ENCODE measurements at regions of chr16 and their contacts with region 1.

Region 1: DNA sequence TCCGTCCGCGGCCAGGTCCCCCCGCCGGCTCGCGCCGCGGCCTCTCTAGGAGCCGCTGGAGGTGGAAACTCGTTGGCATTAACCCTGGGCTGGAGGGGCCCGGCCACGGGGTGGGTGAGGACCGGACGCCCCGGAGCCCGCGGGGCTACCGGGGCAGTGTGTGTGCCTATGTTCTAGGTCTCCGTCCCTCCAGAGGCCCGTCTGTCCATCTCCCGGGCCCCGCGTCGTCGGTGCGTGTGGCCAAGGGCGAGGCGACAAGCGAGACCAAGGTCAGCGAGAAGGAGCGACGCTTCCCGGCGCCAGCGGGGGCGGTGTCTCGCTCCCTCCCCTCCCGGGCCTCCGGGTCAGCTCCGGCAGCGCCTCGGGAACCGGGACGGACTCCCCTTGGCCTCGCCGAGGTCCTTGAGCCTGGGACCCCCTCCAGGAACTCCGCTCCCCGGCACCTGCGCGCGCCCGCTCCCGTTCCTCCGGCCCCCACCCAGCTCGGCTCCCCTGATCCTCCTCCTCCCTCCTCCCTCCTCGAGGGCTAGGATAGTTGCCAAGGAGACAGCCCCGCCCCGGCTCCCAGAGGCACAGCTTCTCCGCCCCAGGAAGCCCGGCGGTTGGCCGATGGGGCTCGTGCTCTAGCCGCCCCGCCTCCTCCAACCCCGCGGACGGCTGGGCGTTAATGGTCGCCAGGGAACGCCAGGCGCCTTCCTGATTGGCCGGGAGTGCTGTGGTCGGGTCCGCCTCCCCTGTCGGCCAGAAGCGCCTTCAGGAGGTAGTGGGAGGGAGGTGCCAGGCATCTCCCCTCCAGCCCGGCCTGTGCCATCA is 663 bp upstream of the ZNF768 start:
- DNase-seq: peak; percentile 97
- ATAC-seq: peak; percentile 89
- H3K4me3 ChIP-seq: peak overlapping the region; percentile 78 to 97 (median 87)
- H3K27ac ChIP-seq: peak overlapping the region; percentile 98
- H3K4me1 ChIP-seq: peaks cover 61% of the 10 kb centered on the region
- H3K27me3 ChIP-seq: no peaks in the 10 kb centered on the region; a peak in 1 of 5 replicates
- CTCF ChIP-seq: peak; percentile 54
- EP300 ChIP-seq: peak in 1 of 2 experiments; percentile 31; a peak in 1 of 4 replicates
- POLR2A ChIP-seq: peak; percentile 70 to 76
- RAD21 ChIP-seq: peak; percentile 75

Region 2: GRCh38 chr16:30488744-30489605 is 38.1 kb before region 1 on chr16:
- CTCF ChIA-PET with region 1: no interaction called
- POLR2A ChIA-PET with region 1: interaction called, 3 read pairs
- in situ Hi-C with region 1: no loop called
- intact Hi-C with region 1: loop called (anchors 2 kb)
- DNase-seq: peak; percentile 78
- ATAC-seq: peak; percentile 86
- H3K4me3 ChIP-seq: peak overlapping the region; percentile 16 to 35 (median 17); a peak in 3 of 6 replicates
- H3K27ac ChIP-seq: peak overlapping the region; percentile 50
- H3K4me1 ChIP-seq: peaks cover 52% of the 10 kb centered on the region
- H3K27me3 ChIP-seq: no peaks in the 10 kb centered on the region
- CTCF ChIP-seq: no peak; the same call in 1 of the 2 replicates
- EP300 ChIP-seq: peak; percentile 29 to 65; a peak in 2 of 4 replicates
- POLR2A ChIP-seq: no peak
- RAD21 ChIP-seq: no peak

Region 3: GRCh38 chr16:30657866-30658730 is 131.1 kb after region 1 on chr16 and contains the start of gene FBRS:
- CTCF ChIA-PET with region 1: no interaction called
- POLR2A ChIA-PET with region 1: interaction called, 5 read pairs
- in situ Hi-C with region 1: no loop called
- intact Hi-C with region 1: loop called (anchors 10 kb)
- DNase-seq: peak; percentile 100
- ATAC-seq: peak; percentile 85
- H3K4me3 ChIP-seq: peak within 1 kb of the TSS; percentile 78 to 89 (median 82)
- H3K27ac ChIP-seq: peak within 1 kb of the TSS; percentile 93
- H3K4me1 ChIP-seq: peaks cover 36% of the 10 kb centered on the region
- H3K27me3 ChIP-seq: no peaks in the 10 kb centered on the region; a peak in 1 of 5 replicates
- CTCF ChIP-seq: peak; percentile 97
- EP300 ChIP-seq: peak in 1 of 2 experiments; percentile 22; a peak in 2 of 4 replicates
- POLR2A ChIP-seq: peak; percentile 76 to 86
- RAD21 ChIP-seq: peak; percentile 97
- total RNA-seq, gene FBRS: 10.1 and 16.2 TPM in 2 replicates

Region 4: DNA sequence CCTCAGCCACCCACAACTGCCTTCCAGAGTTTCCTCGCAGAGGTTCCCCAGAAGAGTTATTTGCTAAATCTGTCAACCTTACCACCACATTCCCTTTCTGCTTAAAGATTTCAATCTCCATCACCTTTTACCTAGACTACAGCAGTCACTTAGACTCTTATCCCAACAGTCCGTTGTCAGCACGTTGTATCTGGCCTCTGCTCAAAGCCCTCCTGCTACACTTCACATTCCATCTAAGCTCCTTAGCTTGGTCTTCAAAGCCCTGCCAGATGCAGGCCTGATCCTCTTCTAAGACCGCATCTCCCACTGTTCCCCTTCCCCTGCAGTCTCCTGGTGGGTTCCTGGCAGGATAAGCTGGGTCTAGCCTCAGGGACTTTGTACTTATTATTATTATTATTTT is 161.6 kb after region 1 on chr16:
- CTCF ChIA-PET with region 1: no interaction called
- POLR2A ChIA-PET with region 1: no interaction called
- in situ Hi-C with region 1: no loop called
- intact Hi-C with region 1: no loop called
- DNase-seq: no peak
- ATAC-seq: peak; percentile 38
- H3K4me3 ChIP-seq: no peak overlapping the region
- H3K27ac ChIP-seq: no peak overlapping the region
- H3K4me1 ChIP-seq: peaks cover 42% of the 10 kb centered on the region
- H3K27me3 ChIP-seq: no peaks in the 10 kb centered on the region
- CTCF ChIP-seq: no peak
- EP300 ChIP-seq: no peak
- POLR2A ChIP-seq: no peak
- RAD21 ChIP-seq: no peak

Region 5: DNA sequence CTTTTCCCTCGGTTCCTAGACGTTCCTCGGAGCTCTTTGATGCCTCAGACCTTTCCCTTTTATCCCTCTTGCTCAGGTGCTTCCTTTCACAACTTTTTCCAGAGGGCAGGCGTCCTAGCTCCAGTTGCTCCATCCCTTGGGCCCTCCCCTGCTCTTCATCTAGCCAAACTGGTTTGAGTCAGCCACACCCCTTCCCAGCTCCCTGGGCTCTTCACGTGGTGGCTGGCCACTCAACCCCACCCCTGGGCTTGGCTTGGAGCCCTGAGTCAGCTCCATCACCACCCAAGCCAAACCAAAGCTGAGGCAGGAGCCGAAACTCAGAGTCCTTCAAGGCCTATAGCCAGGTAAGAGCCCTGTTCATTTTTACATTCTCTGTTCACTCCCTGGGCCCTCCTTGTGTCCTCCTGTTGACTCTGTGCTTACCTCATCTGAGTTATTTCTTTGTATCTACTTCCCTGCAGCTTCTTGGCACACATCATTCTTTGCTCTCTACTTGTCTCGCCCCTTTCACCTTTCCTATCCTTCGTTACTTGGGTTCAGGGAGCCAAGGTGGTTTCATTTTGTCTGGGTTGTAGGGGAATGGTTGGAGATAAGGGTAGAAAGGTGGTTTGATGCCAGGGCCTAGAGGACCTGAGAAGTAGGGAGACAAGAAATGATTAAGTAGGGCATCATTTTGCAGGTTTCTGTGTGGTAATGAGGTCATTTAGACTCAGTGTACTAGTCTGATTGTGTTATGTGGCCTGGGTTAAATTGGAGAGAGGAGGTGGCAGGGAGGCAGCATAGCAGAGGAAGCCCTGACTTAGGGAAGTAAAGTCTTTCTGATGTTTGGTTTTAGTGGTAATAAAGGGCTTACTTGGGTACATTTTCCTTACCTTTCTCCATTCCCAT is 213.6 kb after region 1 on chr16:
- CTCF ChIA-PET with region 1: no interaction called
- POLR2A ChIA-PET with region 1: no interaction called
- in situ Hi-C with region 1: no loop called
- intact Hi-C with region 1: no loop called
- DNase-seq: no peak
- ATAC-seq: no peak
- H3K4me3 ChIP-seq: no peak overlapping the region
- H3K27ac ChIP-seq: peak overlapping the region; percentile 0
- H3K4me1 ChIP-seq: peaks cover 35% of the 10 kb centered on the region
- H3K27me3 ChIP-seq: no peaks in the 10 kb centered on the region
- CTCF ChIP-seq: no peak
- EP300 ChIP-seq: no peak
- POLR2A ChIP-seq: no peak
- RAD21 ChIP-seq: no peak

Measured in HepG2 (cell line).